ENCODE measurements at regions of chr11 and their contacts with region 1.

Region 1: DNA sequence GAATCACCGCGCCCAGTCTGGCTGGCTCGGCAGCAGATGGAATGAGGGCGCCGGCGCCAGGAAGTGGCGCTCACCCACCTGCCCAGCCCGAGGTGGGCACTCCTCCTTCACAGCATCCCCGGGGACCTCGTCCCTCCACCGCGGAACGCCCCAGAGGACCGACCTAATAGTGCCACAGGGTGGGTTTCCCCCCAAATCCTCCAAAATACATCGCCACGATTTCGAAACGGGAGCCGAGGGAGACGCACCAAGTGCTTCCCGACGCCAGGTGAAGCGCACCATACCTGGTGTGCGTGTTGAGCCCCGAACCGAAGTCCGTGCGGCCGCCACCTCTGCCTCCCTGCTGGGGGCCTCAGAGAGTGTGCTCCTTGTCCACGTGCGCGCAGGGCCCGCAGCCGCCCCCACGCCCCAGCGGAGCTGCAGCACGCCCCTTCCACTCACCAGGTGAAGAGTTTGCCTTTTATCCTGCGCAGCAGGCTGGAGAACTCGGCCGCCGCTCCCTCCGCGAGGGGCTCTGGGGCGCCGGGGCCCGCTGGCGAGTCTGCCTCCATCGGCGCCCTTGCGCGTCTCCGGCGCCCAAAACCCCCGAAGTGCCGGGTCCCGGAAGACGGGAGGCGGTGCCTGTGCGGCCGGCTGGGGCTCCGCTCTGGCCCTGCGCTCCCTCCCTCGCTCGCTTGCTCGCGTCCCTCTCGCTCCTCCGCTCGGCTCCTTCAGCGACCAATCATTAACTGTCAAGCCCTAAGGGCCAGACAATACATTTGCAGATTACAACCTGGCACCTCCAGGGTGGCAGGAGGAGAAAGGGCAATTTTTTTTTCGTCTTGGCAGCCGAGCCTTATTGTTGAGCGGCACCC is at the start of gene SLC35F2:
- DNase-seq: peak; percentile 84
- H3K4me3 ChIP-seq: peak within 1 kb of the TSS; percentile 87
- H3K27ac ChIP-seq: peak within 1 kb of the TSS; percentile 89
- H3K4me1 ChIP-seq: no peaks in the 10 kb centered on the region
- H3K27me3 ChIP-seq: no peaks in the 10 kb centered on the region
- CTCF ChIP-seq: no peak
- total RNA-seq, gene SLC35F2: 26.3 to 31.9 TPM

Region 2: DNA sequence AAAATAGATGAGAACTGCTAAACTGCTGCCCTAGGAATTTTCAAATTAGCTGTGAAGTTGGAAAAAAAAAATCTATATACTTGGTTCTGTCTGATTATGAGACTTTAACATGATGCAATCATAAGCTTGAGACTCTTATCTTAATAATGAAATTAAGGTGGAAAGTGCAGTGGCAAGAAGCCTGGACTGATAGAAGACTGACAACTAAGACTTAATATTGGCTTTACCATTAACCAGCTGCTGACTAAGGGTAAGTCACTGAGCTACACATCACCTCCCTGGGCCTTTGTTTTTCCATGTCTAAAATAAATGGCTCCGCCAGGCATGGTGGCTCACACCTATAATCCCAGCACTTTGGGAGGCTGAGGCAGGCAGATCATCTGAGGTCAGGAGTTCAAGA is 56.8 kb before region 1 on chr11:
- intact Hi-C with region 1: loop called (anchors 10 kb)
- DNase-seq: no peak
- H3K4me3 ChIP-seq: no peak overlapping the region
- H3K27ac ChIP-seq: no peak overlapping the region
- H3K4me1 ChIP-seq: no peaks in the 10 kb centered on the region
- H3K27me3 ChIP-seq: no peaks in the 10 kb centered on the region
- CTCF ChIP-seq: no peak

Region 3: DNA sequence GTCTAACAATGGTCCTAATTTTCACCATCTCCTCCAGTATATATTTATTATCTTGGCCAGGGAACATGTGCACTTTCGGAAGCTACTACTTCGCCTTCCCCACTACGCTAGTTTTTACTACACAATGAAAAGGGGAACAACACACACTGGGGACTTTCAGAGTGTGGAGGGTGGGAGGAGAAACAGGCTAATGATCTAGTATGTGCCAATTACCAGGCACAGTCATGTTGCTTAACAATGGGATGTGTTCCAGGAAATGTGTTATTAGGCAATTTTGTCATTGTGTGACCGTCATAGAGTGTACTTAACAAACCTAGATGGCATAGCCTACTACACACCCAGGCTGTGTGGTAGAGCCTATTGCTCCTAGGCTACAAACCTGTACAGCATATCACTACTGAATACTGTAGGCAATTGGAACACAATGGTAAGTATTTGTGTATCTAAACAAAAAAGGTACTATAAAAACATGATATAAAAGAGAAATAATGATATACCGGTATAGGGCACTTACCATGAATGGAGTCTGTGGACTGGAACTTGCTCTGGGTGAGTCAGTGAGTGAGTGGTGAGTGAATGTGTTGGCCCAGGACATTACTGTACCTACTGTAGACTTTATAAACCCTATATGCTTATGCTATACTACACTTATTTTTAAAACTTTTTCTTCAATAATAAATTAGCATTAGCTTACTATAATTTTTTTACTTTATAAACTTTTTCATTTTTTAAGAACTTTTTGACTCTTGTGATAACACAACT is 130.1 kb after region 1 on chr11:
- intact Hi-C with region 1: no loop called
- DNase-seq: no peak
- H3K4me3 ChIP-seq: no peak overlapping the region
- H3K27ac ChIP-seq: no peak overlapping the region
- H3K4me1 ChIP-seq: no peaks in the 10 kb centered on the region
- H3K27me3 ChIP-seq: no peaks in the 10 kb centered on the region
- CTCF ChIP-seq: no peak

Region 4: DNA sequence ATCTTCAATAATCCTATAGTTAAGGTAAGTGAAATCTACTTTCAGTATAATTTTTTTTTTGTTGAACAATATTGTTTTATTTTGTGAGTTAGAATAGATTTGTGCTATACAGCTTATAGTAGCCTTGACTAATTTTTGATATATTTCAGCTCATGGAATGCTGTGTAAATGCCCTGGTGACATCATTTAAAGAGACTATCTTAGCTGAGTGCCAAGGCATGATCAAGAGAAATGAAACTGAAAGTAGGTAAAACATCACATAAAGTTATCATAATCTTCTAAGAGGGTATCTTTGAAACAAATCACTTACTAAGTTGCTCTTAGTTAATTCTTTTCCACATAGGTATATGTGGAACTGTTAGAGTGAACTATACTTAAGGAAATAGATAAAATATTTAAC is 211.5 kb after region 1 on chr11:
- intact Hi-C with region 1: no loop called
- DNase-seq: no peak
- H3K4me3 ChIP-seq: no peak overlapping the region
- H3K27ac ChIP-seq: no peak overlapping the region
- H3K4me1 ChIP-seq: no peaks in the 10 kb centered on the region
- H3K27me3 ChIP-seq: no peaks in the 10 kb centered on the region
- CTCF ChIP-seq: no peak

Measured in colonic mucosa (tissue), 4 donors.